ENCODE measurements at regions of chr11 and their contacts with region 1.

Region 1: DNA sequence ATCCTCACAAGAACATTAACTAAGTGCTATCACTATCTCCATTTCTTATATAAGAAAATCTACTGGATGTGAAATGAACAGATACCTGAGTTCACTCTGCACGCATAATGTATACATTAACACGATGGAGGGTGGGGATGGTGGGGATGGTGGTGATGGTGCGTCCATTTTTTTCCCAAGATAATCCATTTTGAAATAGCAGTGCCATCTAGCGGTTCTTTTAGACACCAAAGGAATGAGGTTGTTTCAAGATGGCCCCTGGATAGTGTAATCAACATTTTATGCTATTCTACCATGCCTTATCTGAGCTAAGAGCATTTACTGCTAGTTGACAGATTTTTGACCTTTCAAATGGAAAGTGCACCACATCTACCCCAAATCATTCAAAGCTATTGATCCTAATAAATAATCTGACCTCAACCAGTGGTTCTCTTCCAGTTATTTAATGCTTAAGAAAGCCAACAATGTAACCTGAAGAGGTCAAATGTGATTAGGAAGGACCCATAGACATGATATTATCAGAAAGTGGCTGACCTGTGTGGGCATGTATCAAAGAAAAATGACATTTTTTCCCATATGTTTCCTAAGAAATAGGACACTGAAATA is 714.7 kb upstream of the TENM4 start:
- DNase-seq: no peak
- ATAC-seq: no peak
- H3K4me3 Mint-ChIP-seq: no peak overlapping the region
- H3K27ac Mint-ChIP-seq: no peak overlapping the region
- H3K4me1 Mint-ChIP-seq: no peaks in the 10 kb centered on the region
- H3K27me3 Mint-ChIP-seq: no peaks in the 10 kb centered on the region

Region 2: DNA sequence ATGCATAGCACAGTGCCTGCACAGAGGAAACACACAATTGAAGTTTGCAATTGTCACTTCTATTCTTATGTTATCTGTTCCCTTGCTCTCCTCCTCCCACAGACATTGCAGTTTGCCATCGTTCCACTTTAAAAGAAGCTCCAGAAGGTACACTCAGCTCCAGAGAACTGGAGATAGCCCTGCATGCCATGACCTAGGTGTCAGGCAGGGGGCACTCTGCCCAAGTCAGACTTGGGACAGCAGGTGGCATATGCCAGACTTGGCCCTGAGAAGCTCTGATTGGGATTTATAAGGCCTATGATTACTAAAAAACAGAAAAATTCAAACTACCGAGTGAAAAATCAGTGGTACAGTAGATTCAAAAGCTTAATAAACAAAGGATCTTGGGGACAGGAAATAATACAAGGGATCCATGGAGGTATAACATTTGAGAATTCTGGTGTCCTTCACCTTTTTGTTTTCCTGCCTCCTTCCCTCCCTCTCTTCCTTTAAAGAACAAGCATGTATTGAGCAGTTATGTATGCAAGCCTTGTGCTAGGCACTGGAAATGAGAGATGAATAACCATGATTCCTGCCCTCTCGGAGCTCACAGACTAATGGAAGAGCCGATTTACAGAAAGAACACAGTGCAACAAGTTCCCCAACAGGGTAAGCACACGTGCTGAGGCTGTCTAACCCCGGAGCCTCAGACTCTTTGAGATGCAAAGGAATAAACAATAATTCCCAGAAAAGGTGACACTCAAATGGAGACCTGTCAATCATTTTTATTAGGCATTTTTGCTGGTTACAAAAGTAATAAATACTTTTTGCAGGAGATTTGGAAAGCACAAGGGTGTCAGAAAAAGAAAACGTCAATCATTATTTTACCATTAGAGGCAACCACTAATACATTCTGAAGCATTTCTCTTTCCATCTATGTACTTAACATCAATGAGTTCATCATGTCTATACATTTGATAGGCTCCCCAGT is 754.5 kb before region 1 on chr11:
- CTCF ChIA-PET with region 1: no interaction called
- POLR2A ChIA-PET with region 1: no interaction called
- intact Hi-C with region 1: loop called in 1 of 2 experiments (anchors 2 kb)
- DNase-seq: peak; percentile 40
- ATAC-seq: no peak
- H3K4me3 Mint-ChIP-seq: no peak overlapping the region
- H3K27ac Mint-ChIP-seq: no peak overlapping the region
- H3K4me1 Mint-ChIP-seq: no peaks in the 10 kb centered on the region
- H3K27me3 Mint-ChIP-seq: peaks cover 4% of the 10 kb centered on the region

Measured in activated CD4-positive, alpha-beta T cell treated with anti-CD3 and anti-CD28 coated beads for 36 hours (primary cell).